ENCODE measurements at regions of chr12 and their contacts with region 1.

Region 1: DNA sequence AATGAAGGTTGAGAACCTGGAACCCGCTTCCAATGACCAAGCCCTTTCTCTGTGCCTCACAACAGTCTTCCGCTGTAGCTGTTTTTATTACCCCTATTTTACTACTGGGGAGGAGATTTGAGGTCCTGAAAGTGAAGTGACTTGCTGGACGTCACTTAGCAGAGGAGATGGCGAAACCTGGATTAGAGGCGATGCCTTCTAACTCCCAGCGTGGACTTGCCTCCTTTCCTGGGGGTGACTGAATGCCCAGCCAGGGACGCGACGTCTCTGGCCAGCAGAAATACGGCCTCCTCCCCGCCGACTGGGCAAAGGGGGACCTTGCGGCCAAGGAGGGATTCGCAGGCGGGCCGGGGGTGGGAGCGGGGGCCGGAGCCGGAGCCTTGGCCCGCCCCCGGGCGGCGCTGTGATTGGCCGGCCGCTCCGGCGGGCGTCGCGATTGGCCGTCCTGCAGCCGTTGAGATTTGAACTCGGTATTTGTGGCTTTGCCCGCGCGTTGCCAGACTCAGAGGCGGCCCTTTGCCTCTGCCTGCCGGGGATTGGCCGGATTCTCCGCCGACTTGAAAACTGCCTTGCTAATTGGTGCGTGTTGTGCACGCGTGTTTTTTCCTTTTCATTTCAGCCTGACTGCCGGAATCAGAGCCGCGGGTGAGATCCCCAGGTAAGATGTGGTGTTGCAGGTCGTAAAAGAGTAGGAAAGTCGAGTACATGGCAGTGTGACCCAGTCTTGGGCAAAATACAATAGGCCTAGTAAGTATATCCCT is at the start of gene NCAPD2:
- DNase-seq: peak; percentile 96
- H3K4me3 Mint-ChIP-seq: peak within 1 kb of the TSS; percentile 97
- H3K27ac Mint-ChIP-seq: peak within 1 kb of the TSS; percentile 97
- H3K4me1 Mint-ChIP-seq: peaks cover 33% of the 10 kb centered on the region
- H3K27me3 Mint-ChIP-seq: peaks cover 3% of the 10 kb centered on the region
- total RNA-seq, gene NCAPD2: 91.6 and 93.4 TPM in 2 replicates

Region 2: DNA sequence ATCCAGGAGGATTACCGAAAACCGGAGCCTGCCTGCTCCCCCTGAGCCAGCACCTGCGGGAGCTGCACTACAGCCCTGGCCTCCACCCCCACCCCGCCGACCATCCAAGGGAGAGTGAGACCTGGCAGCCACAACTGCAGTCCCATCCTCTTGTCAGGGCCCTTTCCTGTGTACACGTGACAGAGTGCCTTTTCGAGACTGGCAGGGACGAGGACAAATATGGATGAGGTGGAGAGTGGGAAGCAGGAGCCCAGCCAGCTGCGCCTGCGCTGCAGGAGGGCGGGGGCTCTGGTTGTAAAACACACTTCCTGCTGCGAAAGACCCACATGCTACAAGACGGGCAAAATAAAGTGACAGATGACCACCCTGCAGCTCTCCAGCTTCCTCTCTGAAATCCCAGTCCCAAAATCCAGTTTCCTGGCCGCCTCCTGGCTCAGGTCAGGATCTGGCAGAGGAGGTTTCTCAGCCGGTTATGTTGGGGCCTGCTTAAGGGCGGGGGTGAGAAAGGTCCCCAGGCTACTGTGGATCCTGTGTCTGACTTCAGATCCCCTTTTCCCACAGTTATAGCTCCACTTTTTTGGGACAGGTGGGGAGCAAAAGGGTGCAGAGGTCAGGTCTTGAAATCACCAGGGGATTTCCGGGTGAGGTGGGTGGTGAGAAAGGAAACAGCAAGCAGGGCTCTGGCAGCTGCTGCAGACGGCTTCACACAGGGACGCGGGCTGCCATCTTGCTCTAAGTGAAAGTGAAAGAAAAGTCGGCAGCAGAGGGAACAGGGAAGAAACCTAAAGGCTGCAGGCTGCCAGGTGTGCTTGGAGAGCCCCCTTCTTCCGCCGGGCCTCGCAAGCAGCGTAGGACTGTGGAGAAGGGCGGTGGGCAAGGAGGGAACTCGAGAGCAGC is 42.1 kb before region 1 on chr12 and contains the start of gene TAPBPL:
- intact Hi-C with region 1: loop called (anchors 5 kb)
- DNase-seq: peak; percentile 79
- H3K4me3 Mint-ChIP-seq: peak within 1 kb of the TSS; percentile 98
- H3K27ac Mint-ChIP-seq: peak within 1 kb of the TSS; percentile 91
- H3K4me1 Mint-ChIP-seq: peaks cover 72% of the 10 kb centered on the region
- H3K27me3 Mint-ChIP-seq: no peaks in the 10 kb centered on the region
- total RNA-seq, gene TAPBPL: 34.1 and 34.3 TPM in 2 replicates

Region 3: DNA sequence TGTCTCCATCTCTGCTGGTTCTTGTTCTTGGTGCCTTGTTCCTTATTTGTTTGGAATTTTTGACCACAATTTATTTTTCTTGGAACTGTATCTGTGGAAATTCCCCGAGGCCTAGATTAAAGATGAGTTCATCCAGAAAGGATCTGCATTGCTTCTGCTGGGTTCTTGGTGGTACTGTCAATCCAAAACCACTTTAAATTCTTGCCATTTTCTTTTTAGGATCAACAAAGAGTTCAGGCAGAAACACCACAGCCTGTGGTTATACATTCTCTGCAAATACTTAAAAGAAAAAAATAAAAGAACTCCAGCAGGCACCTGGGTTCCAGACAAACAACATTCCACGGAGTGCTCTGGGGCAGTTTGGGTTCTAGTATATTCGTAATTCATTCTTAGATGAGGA is 17.2 kb before region 1 on chr12:
- intact Hi-C with region 1: no loop called
- DNase-seq: no peak
- H3K4me3 Mint-ChIP-seq: no peak overlapping the region
- H3K27ac Mint-ChIP-seq: peak overlapping the region; percentile 58
- H3K4me1 Mint-ChIP-seq: peaks cover 10% of the 10 kb centered on the region
- H3K27me3 Mint-ChIP-seq: peaks cover 8% of the 10 kb centered on the region

Region 4: GRCh38 chr12:6554168-6555017 is 60.7 kb after region 1 on chr12:
- intact Hi-C with region 1: loop called (anchors 1 kb)
- DNase-seq: no peak
- H3K4me3 Mint-ChIP-seq: peak overlapping the region; percentile 88
- H3K27ac Mint-ChIP-seq: peak overlapping the region; percentile 61
- H3K4me1 Mint-ChIP-seq: peaks cover 36% of the 10 kb centered on the region
- H3K27me3 Mint-ChIP-seq: no peaks in the 10 kb centered on the region

Region 5: GRCh38 chr12:6752921-6753771 is 259.5 kb after region 1 on chr12 and contains the start of gene MLF2:
- intact Hi-C with region 1: loop called (anchors 1 kb)
- DNase-seq: peak; percentile 97
- H3K4me3 Mint-ChIP-seq: peak within 1 kb of the TSS; percentile 94
- H3K27ac Mint-ChIP-seq: peak within 1 kb of the TSS; percentile 96
- H3K4me1 Mint-ChIP-seq: peaks cover 32% of the 10 kb centered on the region
- H3K27me3 Mint-ChIP-seq: no peaks in the 10 kb centered on the region
- total RNA-seq, gene MLF2: 159 and 161 TPM in 2 replicates

Region 6: DNA sequence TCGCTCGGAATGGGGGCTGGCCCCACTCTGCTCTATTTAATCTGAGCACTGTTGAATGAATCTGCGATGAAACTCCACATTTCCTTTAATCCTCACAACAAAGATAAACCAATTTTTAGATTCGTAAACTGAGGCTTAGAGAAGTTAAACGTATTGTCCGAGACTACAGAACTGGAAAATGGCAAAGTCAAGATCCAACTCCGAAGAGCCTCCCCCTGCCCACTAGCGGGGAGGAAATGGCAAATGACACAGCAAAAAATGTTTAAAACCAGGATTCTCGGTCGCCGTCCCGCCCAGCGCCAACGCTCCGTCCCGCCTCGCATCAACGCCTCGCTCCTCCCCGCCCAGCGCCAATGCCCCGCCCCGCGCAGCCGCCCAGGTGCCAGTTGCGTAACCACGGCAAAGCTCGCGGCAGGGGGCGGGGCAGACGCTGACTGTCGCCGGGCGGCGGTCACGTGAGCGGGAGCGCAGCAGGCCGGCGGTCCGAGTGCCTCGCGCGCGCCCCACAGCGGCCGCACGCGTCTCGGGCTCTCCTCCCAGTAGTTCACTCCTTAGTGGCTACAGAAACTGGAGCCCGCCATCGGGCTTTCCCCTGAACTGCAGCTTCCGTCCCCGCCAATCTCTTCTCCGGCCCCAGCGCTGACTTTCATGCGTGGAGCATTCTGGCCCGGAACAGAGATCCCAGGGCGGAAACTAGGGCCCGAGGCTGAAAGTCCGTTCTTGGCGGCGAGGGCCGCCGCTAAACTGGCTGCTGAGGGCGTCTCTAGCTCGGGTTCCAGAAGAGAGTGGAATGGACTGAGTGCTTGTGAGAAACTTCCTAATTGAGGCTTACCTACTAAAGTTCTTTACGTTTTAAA is 397.3 kb after region 1 on chr12:
- intact Hi-C with region 1: loop called (anchors 5 kb)
- DNase-seq: peak; percentile 98
- H3K4me3 Mint-ChIP-seq: peak overlapping the region; percentile 84
- H3K27ac Mint-ChIP-seq: peak overlapping the region; percentile 95
- H3K4me1 Mint-ChIP-seq: peaks cover 19% of the 10 kb centered on the region
- H3K27me3 Mint-ChIP-seq: no peaks in the 10 kb centered on the region